ENCODE measurements at regions of chr12 and their contacts with region 1.

Region 1: DNA sequence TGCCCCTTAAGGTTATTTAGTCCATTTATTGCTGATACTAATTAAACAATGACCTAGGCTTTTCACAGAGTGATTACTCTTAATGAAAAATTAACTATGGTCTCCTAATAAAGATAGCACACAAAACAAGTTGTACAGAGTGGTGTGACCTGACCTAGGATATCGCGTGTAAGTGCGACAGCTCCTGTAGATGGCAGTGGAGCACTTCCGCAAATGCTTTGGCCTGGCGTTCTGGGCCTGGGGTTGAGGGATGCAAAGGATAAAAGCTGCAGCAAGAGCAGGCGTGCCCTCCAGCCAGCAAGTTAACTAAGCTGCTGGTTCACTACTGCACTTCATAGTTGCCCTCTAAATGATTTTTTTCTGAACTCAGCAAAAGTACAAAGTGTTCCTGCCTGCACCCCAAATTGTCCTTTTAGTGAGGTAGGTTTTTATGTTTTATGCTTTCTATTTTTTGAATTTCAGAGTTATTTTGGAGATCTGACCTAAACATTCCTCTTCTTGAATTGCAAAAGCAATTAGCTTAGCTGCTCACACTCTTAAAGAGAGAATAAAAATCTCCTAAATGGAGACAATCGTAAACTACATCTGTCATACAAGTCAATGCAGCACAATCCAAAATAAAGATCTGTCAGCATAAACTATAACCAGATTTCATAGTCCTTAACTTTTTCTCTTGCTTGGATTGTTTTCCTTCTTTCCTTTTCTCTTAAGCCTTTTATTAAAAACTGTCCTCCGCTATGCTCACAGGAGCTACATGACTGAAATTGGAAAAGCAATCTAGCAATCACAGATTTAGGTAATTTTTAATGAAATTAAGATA is 379.6 kb downstream of the LRIG3 start:
- DNase-seq: peak; percentile 84
- ATAC-seq: peak; percentile 96
- H3K4me3 Mint-ChIP-seq: no peak overlapping the region
- H3K27ac Mint-ChIP-seq: no peak overlapping the region
- H3K4me1 Mint-ChIP-seq: peaks cover 40% of the 10 kb centered on the region
- H3K27me3 Mint-ChIP-seq: no peaks in the 10 kb centered on the region; the same call in 1 of the 2 replicates
- CTCF ChIP-seq: peak; percentile 56

Region 2: GRCh38 chr12:58804749-58805148 is 264.1 kb after region 1 on chr12:
- CTCF ChIA-PET with region 1: interaction called, 10 read pairs
- POLR2A ChIA-PET with region 1: no interaction called
- DNase-seq: no peak
- ATAC-seq: peak; percentile 65
- H3K4me3 Mint-ChIP-seq: no peak overlapping the region
- H3K27ac Mint-ChIP-seq: no peak overlapping the region
- H3K4me1 Mint-ChIP-seq: no peaks in the 10 kb centered on the region
- H3K27me3 Mint-ChIP-seq: no peaks in the 10 kb centered on the region; the same call in 1 of the 2 replicates
- CTCF ChIP-seq: peak; percentile 44

Region 3: DNA sequence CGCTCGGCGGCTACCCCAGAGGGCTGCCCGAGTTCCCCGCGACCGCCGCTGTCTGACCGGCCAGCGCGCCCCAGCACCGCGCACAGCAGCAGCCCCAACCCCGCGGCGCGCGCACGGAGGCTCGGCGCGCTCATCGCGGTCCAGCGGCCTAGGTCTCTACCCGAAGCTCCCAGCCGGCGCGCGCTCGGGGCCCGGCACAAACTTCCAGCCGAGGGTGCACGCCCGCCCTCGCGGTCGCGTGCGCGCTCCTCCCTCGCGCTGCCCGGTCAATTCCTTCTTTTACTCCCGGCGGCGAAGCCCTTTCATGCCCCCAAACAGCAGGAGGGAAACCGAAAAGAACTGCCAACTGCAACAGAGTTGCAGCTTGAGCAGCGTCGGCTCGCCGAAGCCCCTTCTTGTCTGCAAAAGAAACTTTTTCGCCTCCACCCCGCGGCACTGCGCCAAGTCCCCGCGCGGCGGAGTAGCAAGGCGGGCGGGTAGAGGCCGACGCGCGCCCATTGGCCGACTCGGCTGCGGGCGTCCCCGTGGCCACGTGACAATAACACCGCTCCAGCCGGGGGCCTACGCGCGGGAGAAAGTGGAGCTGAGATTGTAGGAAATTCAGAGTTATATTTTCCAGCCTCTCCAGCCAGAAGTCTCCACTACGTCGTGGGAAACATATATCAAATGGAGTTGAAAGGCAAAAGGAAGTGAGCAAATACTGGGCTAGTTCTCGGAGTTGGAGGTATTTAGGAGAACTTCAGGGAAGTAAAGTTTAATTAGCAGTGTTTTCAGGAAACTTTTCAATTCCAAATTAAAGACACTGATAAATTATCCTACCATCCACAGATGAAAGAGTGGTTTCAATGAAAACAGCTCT is 379.6 kb after region 1 on chr12 and contains the start of gene LRIG3:
- CTCF ChIA-PET with region 1: interaction called, 16 read pairs
- POLR2A ChIA-PET with region 1: no interaction called
- DNase-seq: peak; percentile 79
- ATAC-seq: peak; percentile 85
- H3K4me3 Mint-ChIP-seq: peak within 1 kb of the TSS; percentile 82
- H3K27ac Mint-ChIP-seq: peak within 1 kb of the TSS; percentile 84
- H3K4me1 Mint-ChIP-seq: peaks cover 44% of the 10 kb centered on the region
- H3K27me3 Mint-ChIP-seq: peaks cover 19% of the 10 kb centered on the region
- CTCF ChIP-seq: no peak
- total RNA-seq, gene LRIG3: 7.8 to 13.0 TPM (median 8.5 TPM) in 3 replicates

Region 4: GRCh38 chr12:59113831-59114615 is 573.3 kb after region 1 on chr12:
- CTCF ChIA-PET with region 1: interaction called, 24 read pairs
- POLR2A ChIA-PET with region 1: no interaction called
- DNase-seq: peak; percentile 85
- ATAC-seq: peak; percentile 85
- H3K4me3 Mint-ChIP-seq: peak overlapping the region; percentile 22
- H3K27ac Mint-ChIP-seq: no peak overlapping the region
- H3K4me1 Mint-ChIP-seq: peaks cover 7% of the 10 kb centered on the region
- H3K27me3 Mint-ChIP-seq: no peaks in the 10 kb centered on the region
- CTCF ChIP-seq: peak; percentile 87

Region 5: GRCh38 chr12:59164991-59165718 is 624.5 kb after region 1 on chr12:
- CTCF ChIA-PET with region 1: interaction called, 12 read pairs
- POLR2A ChIA-PET with region 1: no interaction called
- DNase-seq: no peak
- ATAC-seq: no peak
- H3K4me3 Mint-ChIP-seq: no peak overlapping the region
- H3K27ac Mint-ChIP-seq: no peak overlapping the region
- H3K4me1 Mint-ChIP-seq: 0 out of 2 replicates have a peak, but pooled peaks cover 2% of the 10 kb centered on the region
- H3K27me3 Mint-ChIP-seq: no peaks in the 10 kb centered on the region
- CTCF ChIP-seq: 0 out of 2 replicates have a peak, but pooled peaks have one; percentile 16